ENCODE measurements at regions of chr4 and their contacts with region 1.

Region 1: GRCh38 chr4:85790582-85790981 is 315.6 kb downstream of the ARHGAP24 start:
- DNase-seq: no peak
- H3K4me3 ChIP-seq: no peak overlapping the region
- H3K27ac ChIP-seq: peak overlapping the region; percentile 52 to 64
- H3K4me1 ChIP-seq: peaks cover 2 to 37% of the 10 kb centered on the region in 2 donors
- H3K27me3 ChIP-seq: no peaks in the 10 kb centered on the region
- CTCF ChIP-seq: no peak

Region 2: GRCh38 chr4:85555206-85555605 is 235.4 kb before region 1 on chr4:
- intact Hi-C with region 1: no loop called
- DNase-seq: no peak
- H3K4me3 ChIP-seq: no peak overlapping the region
- H3K27ac ChIP-seq: no peak overlapping the region
- H3K4me1 ChIP-seq: no peaks in the 10 kb centered on the region
- H3K27me3 ChIP-seq: no peaks in the 10 kb centered on the region
- CTCF ChIP-seq: no peak

Region 3: DNA sequence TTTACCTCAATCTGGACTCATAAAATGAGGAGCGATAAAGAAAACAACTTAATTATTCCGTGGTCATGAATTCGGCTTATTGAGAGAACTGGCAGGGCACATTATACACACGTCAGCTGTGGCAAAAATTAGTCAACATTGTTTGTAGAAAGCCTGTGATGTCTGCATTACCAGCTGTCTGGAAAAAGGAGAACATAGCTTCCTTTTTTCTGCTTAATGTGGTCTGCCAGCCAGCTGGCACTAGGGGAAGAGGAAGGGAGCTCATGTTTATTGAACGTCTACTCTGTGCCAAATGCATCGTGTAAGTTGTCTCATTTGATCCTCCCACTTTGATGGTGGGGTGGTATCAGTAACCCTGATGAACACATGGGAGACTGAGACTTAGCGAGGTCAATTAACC is 52.0 kb after region 1 on chr4:
- intact Hi-C with region 1: loop called (anchors 5 kb)
- DNase-seq: peak; percentile 53 to 90
- H3K4me3 ChIP-seq: no peak overlapping the region
- H3K27ac ChIP-seq: peak overlapping the region; percentile 76 to 84
- H3K4me1 ChIP-seq: peaks cover 4 to 21% of the 10 kb centered on the region in 2 donors
- H3K27me3 ChIP-seq: no peaks in the 10 kb centered on the region
- CTCF ChIP-seq: no peak

Region 4: DNA sequence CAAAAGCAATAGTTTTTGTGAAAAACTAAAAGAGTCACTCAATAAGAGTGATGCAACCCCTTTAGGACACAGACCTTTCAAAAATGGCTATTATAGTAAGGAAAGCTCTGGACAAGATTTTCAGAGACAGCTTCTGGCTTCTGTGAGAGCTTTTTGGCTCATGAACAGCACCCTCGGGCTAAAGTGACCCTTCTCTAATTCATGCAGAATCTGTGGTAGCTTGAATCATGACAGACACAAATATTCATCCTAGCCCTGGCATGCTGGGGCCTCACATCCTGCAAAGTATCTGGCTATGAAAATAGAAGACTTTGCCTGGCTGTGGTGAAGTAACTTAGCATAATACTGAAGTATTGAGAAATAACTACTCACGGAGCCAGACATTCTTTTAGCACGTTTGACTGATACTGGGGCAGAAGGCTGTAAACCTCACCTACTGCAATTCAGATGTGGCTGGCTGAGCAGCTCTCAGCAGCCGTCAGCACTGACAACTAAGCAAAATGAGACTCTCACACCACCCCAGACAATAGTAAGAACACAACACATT is 242.0 kb after region 1 on chr4:
- intact Hi-C with region 1: loop called (anchors 5 kb)
- DNase-seq: peak in 1 of 2 donors; percentile 77
- H3K4me3 ChIP-seq: peak overlapping the region in 1 of 2 donors; percentile 53
- H3K27ac ChIP-seq: peak overlapping the region; percentile 82 to 95
- H3K4me1 ChIP-seq: peaks cover 0 to 9% of the 10 kb centered on the region in 2 donors
- H3K27me3 ChIP-seq: no peaks in the 10 kb centered on the region
- CTCF ChIP-seq: no peak

Measured in ascending aorta (tissue), 2 donors.